ENCODE measurements at regions of chr2 and their contacts with region 1.

Region 1: DNA sequence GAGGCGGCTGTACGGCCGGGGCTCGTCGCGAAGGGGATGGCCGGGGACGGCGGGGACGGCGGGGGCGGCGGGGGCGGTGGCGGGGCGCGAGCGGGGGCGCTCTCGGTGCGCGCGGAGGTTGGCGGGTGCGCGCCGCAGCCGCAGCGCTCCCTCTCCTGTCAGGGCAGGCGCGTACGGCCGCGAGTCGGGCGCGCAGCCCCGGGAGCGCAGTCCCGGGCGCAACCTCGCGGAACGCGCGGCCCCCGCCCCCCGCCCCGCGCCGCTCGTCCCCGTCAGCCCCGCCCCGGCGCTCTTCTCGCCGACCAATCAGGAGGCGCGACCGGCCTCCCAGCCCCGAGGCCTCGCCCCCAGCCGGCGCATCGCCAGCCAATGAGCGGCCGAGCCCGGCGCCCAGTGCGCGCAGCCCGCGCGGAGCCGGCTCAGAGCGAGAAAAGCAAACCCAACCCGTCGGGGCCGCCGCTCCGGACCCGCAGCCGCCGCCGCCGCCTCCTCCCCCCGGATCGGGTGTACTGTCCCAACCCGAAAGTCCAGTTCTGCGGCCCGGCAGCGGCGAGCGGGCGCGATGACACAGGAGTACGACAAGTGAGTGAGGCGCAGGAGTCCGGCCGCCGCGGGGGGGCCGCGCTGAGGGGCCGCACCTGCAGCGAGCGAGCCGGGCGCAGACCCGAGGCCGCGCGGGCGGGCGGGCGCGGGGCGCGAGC is at the start of gene GRHL1:
- DNase-seq: peak; percentile 83 to 99 (median 92)

Region 2: GRCh38 chr2:9843229-9844035 is 108.0 kb before region 1 on chr2 and contains the start of gene TAF1B:
- intact Hi-C with region 1: loop called (anchors 5 kb)
- DNase-seq: peak; percentile 75 to 96 (median 80)